CD4-positive, alpha-beta T cell (primary cell): ENCODE measurements at regions of chr10 and their contacts with region 1.

Region 1: GRCh38 chr10:26468700-26469099 is 30.6 kb downstream of the APBB1IP start:
- DNase-seq: peak; percentile 33 to 83 (median 54)
- ATAC-seq: peak; percentile 86
- H3K4me3 ChIP-seq: peak overlapping the region; percentile 10
- H3K4me3 Mint-ChIP-seq: peak overlapping the region; percentile 84
- H3K27ac ChIP-seq: peak overlapping the region; percentile 13 to 38
- H3K27ac Mint-ChIP-seq: peak overlapping the region; percentile 90
- H3K4me1 ChIP-seq: peaks cover 82% of the 10 kb centered on the region
- H3K4me1 Mint-ChIP-seq: peaks cover 96% of the 10 kb centered on the region
- H3K27me3 ChIP-seq: no peaks in the 10 kb centered on the region
- H3K27me3 Mint-ChIP-seq: no peaks in the 10 kb centered on the region
- CTCF ChIP-seq: no peak

Region 2: GRCh38 chr10:26481914-26482550 is 13.3 kb after region 1 on chr10:
- CTCF ChIA-PET with region 1: interaction called, 10 read pairs
- POLR2A ChIA-PET with region 1: interaction called, 15 read pairs
- intact Hi-C with region 1: loop called (anchors 1 to 2 kb)
- DNase-seq: peak in 11 of 14 experiments; percentile 21 to 89 (median 47)
- ATAC-seq: peak; percentile 73
- H3K4me3 ChIP-seq: peak overlapping the region; percentile 27
- H3K4me3 Mint-ChIP-seq: peak overlapping the region; percentile 47
- H3K27ac ChIP-seq: peak overlapping the region; percentile 66 to 71
- H3K27ac Mint-ChIP-seq: peak overlapping the region; percentile 88
- H3K4me1 ChIP-seq: peaks cover 78% of the 10 kb centered on the region
- H3K4me1 Mint-ChIP-seq: peaks cover 79% of the 10 kb centered on the region
- H3K27me3 ChIP-seq: no peaks in the 10 kb centered on the region
- H3K27me3 Mint-ChIP-seq: no peaks in the 10 kb centered on the region
- CTCF ChIP-seq: no peak

Region 3: DNA sequence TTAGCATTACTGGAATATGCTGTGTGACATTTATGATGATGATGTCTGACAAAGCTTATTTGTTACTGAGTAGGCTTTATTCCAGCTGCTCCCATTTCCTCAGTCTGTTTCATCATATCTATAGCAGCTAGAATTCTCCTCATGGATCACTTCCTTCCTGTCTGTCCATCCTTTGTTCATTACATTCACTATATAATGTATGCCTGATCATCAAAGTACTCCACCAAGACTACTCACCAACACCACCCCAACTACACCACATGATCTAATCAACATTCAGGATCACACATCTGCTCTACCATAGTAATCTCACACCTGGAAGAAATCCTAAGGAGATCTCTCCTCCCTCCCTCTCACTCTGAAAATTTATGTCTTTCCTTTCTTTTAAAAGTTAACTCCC is 30.7 kb after region 1 on chr10:
- CTCF ChIA-PET with region 1: no interaction called
- POLR2A ChIA-PET with region 1: no interaction called
- intact Hi-C with region 1: no loop called
- DNase-seq: no peak
- ATAC-seq: no peak
- H3K4me3 ChIP-seq: no peak overlapping the region
- H3K4me3 Mint-ChIP-seq: no peak overlapping the region
- H3K27ac ChIP-seq: no peak overlapping the region
- H3K27ac Mint-ChIP-seq: peak overlapping the region; percentile 10
- H3K4me1 ChIP-seq: peaks cover 4% of the 10 kb centered on the region
- H3K4me1 Mint-ChIP-seq: peaks cover 34% of the 10 kb centered on the region
- H3K27me3 ChIP-seq: no peaks in the 10 kb centered on the region
- H3K27me3 Mint-ChIP-seq: no peaks in the 10 kb centered on the region
- CTCF ChIP-seq: no peak